AG04450 (cell line): ENCODE measurements at regions of chr6 and their contacts with region 1.

Region 1: DNA sequence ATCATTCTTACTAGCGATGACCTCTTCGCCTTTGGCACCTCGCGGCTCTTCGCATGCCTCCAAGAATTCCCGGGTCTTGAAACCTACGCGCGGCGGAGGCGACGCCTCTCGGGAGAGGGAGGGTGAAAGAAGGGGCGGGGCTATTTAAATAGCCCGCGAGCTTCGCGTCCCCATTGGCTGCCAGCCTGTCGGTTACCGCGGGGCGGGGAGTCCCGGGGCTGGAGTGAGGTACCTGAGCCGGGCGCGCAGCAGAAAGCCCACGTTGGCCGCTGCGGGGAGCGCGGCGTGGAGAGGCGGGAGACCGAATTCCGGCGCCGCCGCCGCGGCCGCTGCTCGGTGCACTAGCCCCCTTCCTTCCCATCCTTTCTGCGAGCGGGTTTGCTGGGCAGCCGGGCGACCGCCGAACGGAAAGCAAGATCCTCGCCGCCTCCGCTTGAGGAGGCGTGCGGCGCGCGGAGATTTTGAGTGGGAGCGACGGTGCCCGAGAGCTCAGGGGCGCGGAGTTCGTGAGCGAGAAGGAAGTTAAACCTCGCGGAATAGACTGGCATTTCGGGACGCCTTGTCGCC is at the start of gene BMP6:
- DNase-seq: peak; percentile 20
- H3K4me3 ChIP-seq: peak within 1 kb of the TSS; percentile 62
- H3K27ac ChIP-seq: no peak within 1 kb of the TSS
- H3K27me3 ChIP-seq: peaks cover 31% of the 10 kb centered on the region
- CTCF ChIP-seq: no peak
- polyA plus RNA-seq, gene BMP6: 0.69 and 0.77 TPM in 2 replicates

Region 2: GRCh38 chr6:7707787-7708186 is 18.1 kb before region 1 on chr6:
- CTCF ChIA-PET with region 1: interaction called, 11 read pairs
- POLR2A ChIA-PET with region 1: no interaction called
- DNase-seq: no peak
- H3K4me3 ChIP-seq: no peak overlapping the region
- H3K27ac ChIP-seq: no peak overlapping the region
- H3K27me3 ChIP-seq: no peaks in the 10 kb centered on the region
- CTCF ChIP-seq: no peak

Region 3: GRCh38 chr6:7846966-7847818 is 121.3 kb after region 1 on chr6:
- CTCF ChIA-PET with region 1: interaction called, 14 read pairs
- POLR2A ChIA-PET with region 1: no interaction called
- DNase-seq: peak; percentile 18
- H3K4me3 ChIP-seq: no peak overlapping the region
- H3K27ac ChIP-seq: peak overlapping the region; percentile 75
- H3K27me3 ChIP-seq: no peaks in the 10 kb centered on the region
- CTCF ChIP-seq: peak; percentile 46

Region 4: GRCh38 chr6:7992002-7992815 is 266.3 kb after region 1 on chr6:
- CTCF ChIA-PET with region 1: interaction called, 13 read pairs
- POLR2A ChIA-PET with region 1: no interaction called
- DNase-seq: peak; percentile 49
- H3K4me3 ChIP-seq: peak overlapping the region; percentile 42
- H3K27ac ChIP-seq: peak overlapping the region; percentile 48
- H3K27me3 ChIP-seq: no peaks in the 10 kb centered on the region
- CTCF ChIP-seq: peak; percentile 63

Region 5: DNA sequence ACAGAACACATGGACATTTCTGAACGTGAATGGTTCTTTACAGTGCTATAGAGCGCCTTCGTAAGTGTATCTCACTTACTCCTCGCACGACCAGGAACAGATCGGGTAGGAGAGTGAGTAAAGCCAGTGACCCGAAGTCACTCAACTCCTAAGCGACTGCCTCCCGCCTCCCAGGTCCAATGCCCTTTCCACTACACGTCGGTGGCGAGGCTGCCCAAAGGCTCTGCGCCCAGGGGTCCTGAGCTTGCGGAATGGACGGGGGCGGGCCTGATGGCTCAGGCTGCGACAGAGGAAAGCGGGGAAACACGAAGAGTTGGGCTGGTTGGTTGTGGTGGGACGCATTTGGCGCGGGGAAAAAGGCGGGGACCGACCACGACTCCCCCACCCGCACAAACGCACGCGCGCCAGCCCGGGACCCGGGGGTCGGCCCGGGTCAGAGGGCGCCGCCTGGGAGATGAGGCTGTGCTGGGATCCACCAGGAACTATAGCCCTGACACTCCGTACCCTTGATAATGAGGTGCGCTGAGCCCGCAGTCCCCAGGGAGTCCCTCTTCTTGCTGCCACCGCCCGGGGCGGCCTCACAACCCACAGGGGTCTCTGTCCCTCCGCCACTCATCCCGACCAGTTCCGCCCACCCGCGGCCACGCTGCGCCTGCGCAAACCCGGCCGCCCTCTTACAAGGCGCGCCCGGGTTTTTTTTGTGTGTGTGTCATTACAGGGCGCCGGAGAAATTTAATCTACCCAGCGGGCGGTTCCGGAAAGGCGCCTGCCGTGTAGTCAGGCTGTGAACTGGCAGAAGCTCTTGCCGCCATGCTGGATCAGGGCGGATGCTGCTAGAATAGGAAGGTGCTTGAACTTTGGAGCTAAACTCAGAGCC is 338.1 kb after region 1 on chr6 and contains the start of gene BLOC1S5:
- CTCF ChIA-PET with region 1: interaction called, 116 read pairs
- POLR2A ChIA-PET with region 1: no interaction called
- DNase-seq: peak; percentile 91
- H3K4me3 ChIP-seq: peak within 1 kb of the TSS; percentile 90
- H3K27ac ChIP-seq: peak within 1 kb of the TSS; percentile 63
- H3K27me3 ChIP-seq: no peaks in the 10 kb centered on the region
- CTCF ChIP-seq: peak; percentile 12; the same call in 1 of the 2 replicates
- polyA plus RNA-seq, gene BLOC1S5: 8.4 and 15.1 TPM in 2 replicates